B cell (primary cell): ENCODE measurements at regions of chr16 and their contacts with region 1.

Region 1: GRCh38 chr16:2147981-2148671 is at the start of gene RAB26:
- DNase-seq: peak; percentile 74
- ATAC-seq: peak; percentile 88
- H3K4me3 ChIP-seq: peak within 1 kb of the TSS in 4 of 5 experiments; percentile 47 to 67 (median 56)
- H3K4me3 Mint-ChIP-seq: peak within 1 kb of the TSS; percentile 54
- H3K27ac ChIP-seq: no peak within 1 kb of the TSS
- H3K27ac Mint-ChIP-seq: no peak within 1 kb of the TSS
- H3K4me1 ChIP-seq: peaks cover 37 to 52% of the 10 kb centered on the region in 2 donors
- H3K4me1 Mint-ChIP-seq: peaks cover 28% of the 10 kb centered on the region
- H3K27me3 ChIP-seq: peaks cover 0 to 4% (median 0%) of the 10 kb centered on the region in 4 experiments
- H3K27me3 Mint-ChIP-seq: no peaks in the 10 kb centered on the region
- CTCF ChIP-seq: no peak
- total RNA-seq, gene RAB26: 0.58 and 0.62 TPM in 2 replicates

Region 2: GRCh38 chr16:1863681-1864460 is 284.3 kb before region 1 on chr16:
- CTCF ChIA-PET with region 1: no interaction called
- POLR2A ChIA-PET with region 1: interaction called, 4 read pairs
- intact Hi-C with region 1: loop called (anchors 10 kb)
- DNase-seq: peak; percentile 59
- ATAC-seq: no peak
- H3K4me3 ChIP-seq: no peak overlapping the region
- H3K4me3 Mint-ChIP-seq: no peak overlapping the region
- H3K27ac ChIP-seq: no peak overlapping the region
- H3K27ac Mint-ChIP-seq: no peak overlapping the region
- H3K4me1 ChIP-seq: no peaks in the 10 kb centered on the region
- H3K4me1 Mint-ChIP-seq: no peaks in the 10 kb centered on the region
- H3K27me3 ChIP-seq: peaks cover 0 to 13% (median 7%) of the 10 kb centered on the region in 4 experiments
- H3K27me3 Mint-ChIP-seq: peaks cover 38% of the 10 kb centered on the region
- CTCF ChIP-seq: peak; percentile 82

Region 3: GRCh38 chr16:2160915-2161551 is 12.9 kb after region 1 on chr16:
- CTCF ChIA-PET with region 1: no interaction called
- POLR2A ChIA-PET with region 1: no interaction called
- intact Hi-C with region 1: no loop called
- DNase-seq: no peak
- ATAC-seq: peak; percentile 12
- H3K4me3 ChIP-seq: no peak overlapping the region
- H3K4me3 Mint-ChIP-seq: peak overlapping the region; percentile 19
- H3K27ac ChIP-seq: no peak overlapping the region
- H3K27ac Mint-ChIP-seq: peak overlapping the region; percentile 56
- H3K4me1 ChIP-seq: peaks cover 10 to 37% of the 10 kb centered on the region in 2 donors
- H3K4me1 Mint-ChIP-seq: peaks cover 32% of the 10 kb centered on the region
- H3K27me3 ChIP-seq: no peaks in the 10 kb centered on the region
- H3K27me3 Mint-ChIP-seq: no peaks in the 10 kb centered on the region
- CTCF ChIP-seq: no peak